ENCODE measurements at regions of chr12 and their contacts with region 1.

Region 1: GRCh38 chr12:56299853-56300643 is at the start of gene CS:
- DNase-seq: peak; percentile 99
- H3K4me3 ChIP-seq: peak within 1 kb of the TSS; percentile 75 to 92 (median 87)
- H3K27ac ChIP-seq: peak within 1 kb of the TSS; percentile 96 to 98
- H3K4me1 ChIP-seq: peaks cover 0 to 7% of the 10 kb centered on the region in 2 donors
- H3K27me3 ChIP-seq: no peaks in the 10 kb centered on the region
- CTCF ChIP-seq: peak in 1 of 3 donors; percentile 14
- POLR2A ChIP-seq: peak; percentile 35
- total RNA-seq, gene CS: 79.2 to 132 (median 103) TPM

Region 2: DNA sequence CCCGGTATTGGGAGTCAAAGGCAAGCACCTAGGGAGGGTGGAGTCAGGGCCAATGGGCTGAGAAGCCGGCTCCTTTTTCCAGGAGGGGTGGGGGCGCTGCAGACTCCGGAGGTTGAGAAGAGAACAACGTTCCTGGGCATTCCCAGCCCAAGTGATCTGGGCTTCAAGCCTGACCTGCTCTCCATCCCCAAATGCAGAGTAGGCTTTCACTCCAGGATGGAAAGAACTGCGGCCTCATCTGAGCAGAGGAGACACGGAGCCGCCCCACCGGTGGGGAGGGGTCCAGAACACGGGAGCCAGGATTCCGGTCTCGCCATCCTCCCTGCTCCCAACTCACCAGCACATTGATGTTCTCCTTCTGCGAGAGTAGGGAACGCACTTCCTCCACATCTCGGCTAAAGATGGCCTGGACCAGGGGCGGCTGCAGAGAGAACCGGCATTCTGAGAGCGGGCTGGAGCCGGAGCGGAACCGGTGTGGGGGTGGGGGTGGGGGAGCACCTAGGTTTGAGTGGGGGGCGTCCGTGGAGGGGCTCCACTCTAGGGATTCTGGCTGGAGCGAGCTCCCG is 42.5 kb before region 1 on chr12:
- intact Hi-C with region 1: loop called (anchors 2 kb)
- DNase-seq: no peak
- H3K4me3 ChIP-seq: peak overlapping the region; percentile 80 to 96 (median 80)
- H3K27ac ChIP-seq: peak overlapping the region; percentile 83 to 86
- H3K4me1 ChIP-seq: peaks cover 0 to 12% of the 10 kb centered on the region in 2 donors
- H3K27me3 ChIP-seq: no peaks in the 10 kb centered on the region
- CTCF ChIP-seq: no peak
- POLR2A ChIP-seq: no peak

Measured in breast epithelium (tissue), 4 donors.